ENCODE measurements at regions of chr19 and their contacts with region 1.

Region 1: GRCh38 chr19:21202865-21203494 is 61.1 kb downstream of the ZNF431 start:
- DNase-seq: peak; percentile 34
- ATAC-seq: peak; percentile 97
- H3K4me3 Mint-ChIP-seq: no peak overlapping the region
- H3K27ac Mint-ChIP-seq: no peak overlapping the region
- H3K4me1 Mint-ChIP-seq: peaks cover 2% of the 10 kb centered on the region; the same call in 1 of the 2 replicates
- H3K27me3 Mint-ChIP-seq: peaks cover 9% of the 10 kb centered on the region
- CTCF ChIP-seq: peak; percentile 76

Region 2: GRCh38 chr19:21256722-21257121 is 53.7 kb after region 1 on chr19:
- CTCF ChIA-PET with region 1: interaction called, 26 read pairs
- POLR2A ChIA-PET with region 1: no interaction called
- DNase-seq: peak; percentile 21
- ATAC-seq: peak; percentile 90
- H3K4me3 Mint-ChIP-seq: no peak overlapping the region
- H3K27ac Mint-ChIP-seq: no peak overlapping the region
- H3K4me1 Mint-ChIP-seq: 0 out of 2 replicates have a peak, but pooled peaks cover 2% of the 10 kb centered on the region
- H3K27me3 Mint-ChIP-seq: peaks cover 13% of the 10 kb centered on the region
- CTCF ChIP-seq: peak; percentile 32; the same call in 1 of the 2 replicates